PC-3 (cell line): ENCODE measurements at regions of chr5 and their contacts with region 1.

Region 1: GRCh38 chr5:36870399-36871040 is 6.0 kb upstream of the NIPBL start:
- DNase-seq: peak; percentile 87
- ATAC-seq: peak; percentile 61
- H3K4me3 ChIP-seq: no peak overlapping the region
- H3K27ac ChIP-seq: no peak overlapping the region
- H3K4me1 ChIP-seq: peaks cover 24% of the 10 kb centered on the region
- H3K27me3 ChIP-seq: no peaks in the 10 kb centered on the region
- CTCF ChIP-seq: peak; percentile 82

Region 2: DNA sequence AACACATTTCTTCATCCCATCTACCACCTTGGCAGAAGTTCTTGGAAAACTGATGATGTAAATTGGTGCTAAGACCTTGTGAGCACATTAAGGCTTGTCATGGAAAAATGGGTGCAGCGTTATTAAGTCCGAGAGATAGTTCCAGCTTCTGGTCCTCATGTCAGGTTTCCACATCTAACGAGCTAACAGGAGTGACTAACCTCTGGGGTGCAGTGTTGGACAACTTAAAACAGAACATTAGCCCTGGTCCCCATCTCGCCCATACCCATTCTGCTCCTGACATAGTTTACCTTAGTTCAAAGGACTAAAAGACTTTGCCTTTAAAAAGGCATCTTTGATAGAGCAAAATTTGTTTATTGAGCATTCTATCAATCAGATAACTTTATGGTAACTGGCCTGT is 136.1 kb before region 1 on chr5:
- CTCF ChIA-PET with region 1: interaction called, 10 read pairs
- POLR2A ChIA-PET with region 1: no interaction called
- intact Hi-C with region 1: loop called (anchors 1 kb)
- DNase-seq: peak; percentile 58
- ATAC-seq: peak; percentile 92
- H3K4me3 ChIP-seq: no peak overlapping the region
- H3K27ac ChIP-seq: no peak overlapping the region
- H3K4me1 ChIP-seq: no peaks in the 10 kb centered on the region
- H3K27me3 ChIP-seq: no peaks in the 10 kb centered on the region
- CTCF ChIP-seq: peak; percentile 62

Region 3: GRCh38 chr5:36739751-36740221 is 130.7 kb before region 1 on chr5:
- CTCF ChIA-PET with region 1: interaction called, 10 read pairs
- POLR2A ChIA-PET with region 1: no interaction called
- intact Hi-C with region 1: loop called (anchors 1 kb)
- DNase-seq: peak; percentile 89
- ATAC-seq: peak; percentile 28; the same call in 1 of the 2 replicates
- H3K4me3 ChIP-seq: peak overlapping the region; percentile 9; the same call in 1 of the 2 replicates
- H3K27ac ChIP-seq: no peak overlapping the region
- H3K4me1 ChIP-seq: peaks cover 10% of the 10 kb centered on the region
- H3K27me3 ChIP-seq: no peaks in the 10 kb centered on the region
- CTCF ChIP-seq: peak; percentile 95

Region 4: DNA sequence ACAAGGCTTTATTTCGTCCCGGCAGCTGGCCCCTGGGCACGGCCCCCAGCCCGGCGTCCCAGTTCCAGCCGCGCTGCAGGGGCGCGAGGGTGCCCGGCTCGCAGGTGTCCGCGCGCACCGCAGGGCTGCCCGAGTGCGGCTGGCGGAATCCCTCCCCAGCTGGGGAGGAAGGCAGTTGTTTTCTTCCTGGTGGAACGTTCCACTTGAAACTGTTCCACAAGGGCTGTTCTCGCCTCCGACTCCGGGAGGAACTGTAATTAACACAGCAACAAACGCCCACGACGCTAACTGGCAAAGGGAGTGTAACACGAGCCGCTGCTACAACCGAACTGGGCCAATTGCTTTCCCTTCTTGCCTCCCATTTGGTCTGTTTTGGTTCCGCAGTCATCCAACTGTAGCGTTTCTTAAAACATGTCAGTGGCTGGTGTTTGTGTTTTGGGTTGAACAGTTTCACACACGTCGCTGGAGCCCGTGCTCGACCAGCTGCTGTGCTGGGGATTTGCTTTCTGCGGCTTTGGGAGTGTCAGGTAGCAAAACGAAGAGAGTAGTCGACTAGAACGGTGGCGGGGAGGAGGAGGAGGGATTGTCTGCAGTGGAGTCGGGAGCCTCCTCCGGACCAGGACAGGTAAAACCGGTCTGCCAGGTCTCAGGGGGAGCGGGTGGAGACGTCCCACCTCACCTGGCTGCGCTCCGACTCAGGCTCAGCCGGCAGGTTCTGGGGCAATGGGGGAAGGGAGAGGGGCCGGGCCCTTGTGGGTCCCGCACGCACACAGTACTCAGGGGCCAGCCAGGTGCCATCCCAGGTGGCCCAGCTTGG is 125.5 kb before region 1 on chr5:
- CTCF ChIA-PET with region 1: interaction called, 3 read pairs
- POLR2A ChIA-PET with region 1: no interaction called
- intact Hi-C with region 1: loop called (anchors 1 kb)
- DNase-seq: peak; percentile 94
- ATAC-seq: peak; percentile 62
- H3K4me3 ChIP-seq: peak overlapping the region; percentile 90
- H3K27ac ChIP-seq: peak overlapping the region; percentile 59
- H3K4me1 ChIP-seq: peaks cover 18% of the 10 kb centered on the region
- H3K27me3 ChIP-seq: peaks cover 16% of the 10 kb centered on the region
- CTCF ChIP-seq: peak; percentile 77; the same call in 1 of the 2 replicates

Region 5: GRCh38 chr5:36777105-36777757 is 93.3 kb before region 1 on chr5:
- CTCF ChIA-PET with region 1: interaction called, 3 read pairs
- POLR2A ChIA-PET with region 1: no interaction called
- intact Hi-C with region 1: loop called (anchors 1 kb)
- DNase-seq: peak; percentile 49
- ATAC-seq: peak; percentile 31; the same call in 1 of the 2 replicates
- H3K4me3 ChIP-seq: no peak overlapping the region
- H3K27ac ChIP-seq: no peak overlapping the region
- H3K4me1 ChIP-seq: no peaks in the 10 kb centered on the region
- H3K27me3 ChIP-seq: no peaks in the 10 kb centered on the region
- CTCF ChIP-seq: peak; percentile 48